Activated B cell treated with CpG ODN at 0.5 μM for 24 hours (primary cell): ENCODE measurements at regions of chr6 and their contacts with region 1.

Region 1: DNA sequence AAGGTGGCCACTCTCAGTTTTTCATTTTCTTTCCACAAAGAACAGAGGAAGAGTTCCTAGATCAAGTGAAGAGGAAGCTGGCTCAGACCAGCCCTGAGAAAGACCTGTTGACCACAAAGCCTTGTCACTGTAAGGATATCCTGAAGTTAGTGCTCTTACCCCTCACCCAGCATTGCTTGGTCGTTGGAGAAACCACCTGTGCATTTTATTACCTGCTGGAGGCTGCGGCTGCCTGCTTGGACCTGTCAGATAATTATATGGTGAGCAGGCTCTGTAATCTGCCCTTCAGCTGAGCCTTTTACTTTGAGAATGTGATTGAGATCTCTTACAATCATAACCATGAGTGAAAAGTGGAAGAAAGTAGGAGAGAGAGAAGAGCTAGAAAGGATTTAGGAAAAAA is 21.9 kb downstream of the TREML1 start:
- DNase-seq: no peak
- ATAC-seq: no peak
- H3K4me3 Mint-ChIP-seq: no peak overlapping the region
- H3K27ac Mint-ChIP-seq: no peak overlapping the region
- H3K4me1 Mint-ChIP-seq: no peaks in the 10 kb centered on the region
- H3K27me3 Mint-ChIP-seq: no peaks in the 10 kb centered on the region
- CTCF ChIP-seq: no peak

Region 2: GRCh38 chr6:41111036-41111435 is 21.2 kb before region 1 on chr6:
- CTCF ChIA-PET with region 1: no interaction called
- POLR2A ChIA-PET with region 1: interaction called, 11 read pairs
- intact Hi-C with region 1: no loop called
- DNase-seq: no peak
- ATAC-seq: no peak
- H3K4me3 Mint-ChIP-seq: no peak overlapping the region
- H3K27ac Mint-ChIP-seq: no peak overlapping the region
- H3K4me1 Mint-ChIP-seq: no peaks in the 10 kb centered on the region
- H3K27me3 Mint-ChIP-seq: no peaks in the 10 kb centered on the region
- CTCF ChIP-seq: no peak